ENCODE measurements at regions of chr7 and their contacts with region 1.

Region 1: GRCh38 chr7:28298870-28299518 is 113.3 kb upstream of the CREB5 start:
- DNase-seq: peak; percentile 56 to 70
- H3K4me3 ChIP-seq: no peak overlapping the region
- H3K4me3 Mint-ChIP-seq: no peak overlapping the region
- H3K27ac Mint-ChIP-seq: no peak overlapping the region
- H3K4me1 ChIP-seq: no peaks in the 10 kb centered on the region
- H3K4me1 Mint-ChIP-seq: no peaks in the 10 kb centered on the region
- H3K27me3 ChIP-seq: no peaks in the 10 kb centered on the region
- H3K27me3 Mint-ChIP-seq: peaks cover 3% of the 10 kb centered on the region
- CTCF ChIP-seq: peak; percentile 47 to 79

Region 2: GRCh38 chr7:28272461-28272877 is 26.5 kb before region 1 on chr7:
- CTCF ChIA-PET with region 1: no interaction called
- POLR2A ChIA-PET with region 1: no interaction called
- intact Hi-C with region 1: no loop called
- DNase-seq: peak; percentile 41 to 48
- H3K4me3 ChIP-seq: no peak overlapping the region
- H3K4me3 Mint-ChIP-seq: no peak overlapping the region
- H3K27ac Mint-ChIP-seq: no peak overlapping the region
- H3K4me1 ChIP-seq: no peaks in the 10 kb centered on the region
- H3K4me1 Mint-ChIP-seq: no peaks in the 10 kb centered on the region
- H3K27me3 ChIP-seq: no peaks in the 10 kb centered on the region
- H3K27me3 Mint-ChIP-seq: peaks cover 25% of the 10 kb centered on the region
- CTCF ChIP-seq: peak; percentile 58 to 77

Region 3: GRCh38 chr7:28364082-28364481 is 65.1 kb after region 1 on chr7:
- CTCF ChIA-PET with region 1: interaction called, 6 read pairs
- POLR2A ChIA-PET with region 1: no interaction called
- intact Hi-C with region 1: loop called (anchors 5 kb)
- DNase-seq: no peak
- H3K4me3 ChIP-seq: no peak overlapping the region
- H3K4me3 Mint-ChIP-seq: no peak overlapping the region
- H3K27ac Mint-ChIP-seq: no peak overlapping the region
- H3K4me1 ChIP-seq: no peaks in the 10 kb centered on the region
- H3K4me1 Mint-ChIP-seq: peaks cover 6% of the 10 kb centered on the region
- H3K27me3 ChIP-seq: no peaks in the 10 kb centered on the region; the same call in 1 of the 2 replicates
- H3K27me3 Mint-ChIP-seq: peaks cover 3% of the 10 kb centered on the region
- CTCF ChIP-seq: peak; percentile 5 to 42

Region 4: GRCh38 chr7:28378574-28379149 is 79.7 kb after region 1 on chr7:
- CTCF ChIA-PET with region 1: interaction called, 4 read pairs
- POLR2A ChIA-PET with region 1: no interaction called
- intact Hi-C with region 1: loop called (anchors 1 kb)
- DNase-seq: no peak
- H3K4me3 ChIP-seq: no peak overlapping the region
- H3K4me3 Mint-ChIP-seq: no peak overlapping the region
- H3K27ac Mint-ChIP-seq: no peak overlapping the region
- H3K4me1 ChIP-seq: 0 out of 2 replicates have a peak, but pooled peaks cover 4% of the 10 kb centered on the region
- H3K4me1 Mint-ChIP-seq: no peaks in the 10 kb centered on the region
- H3K27me3 ChIP-seq: no peaks in the 10 kb centered on the region
- H3K27me3 Mint-ChIP-seq: peaks cover 3% of the 10 kb centered on the region
- CTCF ChIP-seq: no peak

Region 5: GRCh38 chr7:28383975-28384374 is 85.0 kb after region 1 on chr7:
- CTCF ChIA-PET with region 1: interaction called, 4 read pairs
- POLR2A ChIA-PET with region 1: no interaction called
- intact Hi-C with region 1: loop called (anchors 1 kb)
- DNase-seq: no peak
- H3K4me3 ChIP-seq: no peak overlapping the region
- H3K4me3 Mint-ChIP-seq: no peak overlapping the region
- H3K27ac Mint-ChIP-seq: no peak overlapping the region
- H3K4me1 ChIP-seq: no peaks in the 10 kb centered on the region
- H3K4me1 Mint-ChIP-seq: no peaks in the 10 kb centered on the region
- H3K27me3 ChIP-seq: no peaks in the 10 kb centered on the region
- H3K27me3 Mint-ChIP-seq: peaks cover 3% of the 10 kb centered on the region
- CTCF ChIP-seq: no peak

Region 6: DNA sequence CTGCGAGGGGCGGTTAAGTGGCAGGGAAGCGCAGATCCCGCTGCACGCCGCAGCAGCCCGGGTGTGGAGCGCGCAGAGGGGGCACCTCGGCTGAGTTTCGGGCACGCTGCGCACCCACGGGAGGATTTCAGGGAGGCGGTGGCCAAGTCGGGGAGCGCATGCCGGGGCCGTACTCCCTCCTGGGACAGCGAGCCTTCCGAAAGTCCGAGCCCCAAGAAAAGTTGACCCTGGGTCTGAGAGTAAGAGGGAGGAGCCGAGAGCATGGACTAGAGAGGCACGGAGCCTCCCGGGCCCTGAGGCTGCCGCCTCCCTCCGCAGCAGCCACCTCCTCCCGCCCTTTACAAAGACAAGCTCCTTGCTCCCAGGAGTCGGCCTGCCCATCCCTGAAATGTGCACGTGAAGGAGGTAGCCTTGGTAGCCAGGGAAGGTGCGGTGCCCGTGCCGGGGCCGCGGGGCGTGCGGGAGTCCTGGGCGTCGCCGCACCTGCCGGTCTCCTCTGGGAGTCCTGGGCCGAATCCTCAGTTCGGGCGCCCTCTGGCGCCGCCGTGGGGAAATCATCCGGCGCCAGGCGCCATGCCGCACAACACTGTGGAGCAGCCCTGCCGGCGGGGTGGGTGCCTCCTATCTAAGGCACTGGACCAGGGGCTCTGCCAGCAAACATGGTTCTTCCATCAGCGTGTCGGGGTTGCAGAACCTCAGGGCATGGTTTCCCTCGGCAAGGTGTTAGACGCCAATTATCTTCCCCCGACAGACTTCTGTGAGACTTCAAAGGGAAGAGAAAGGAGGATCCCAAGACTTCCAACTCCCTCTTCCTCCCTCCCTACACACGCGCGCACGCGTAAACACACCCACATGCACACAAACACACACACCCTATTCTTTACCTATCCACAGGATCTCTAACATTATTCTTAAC is 555.1 kb after region 1 on chr7:
- CTCF ChIA-PET with region 1: no interaction called
- POLR2A ChIA-PET with region 1: no interaction called
- intact Hi-C with region 1: loop called (anchors 1 kb)
- DNase-seq: peak; percentile 79 to 94
- H3K4me3 ChIP-seq: peak overlapping the region; percentile 46
- H3K4me3 Mint-ChIP-seq: peak overlapping the region; percentile 78
- H3K27ac Mint-ChIP-seq: peak overlapping the region; percentile 34
- H3K4me1 ChIP-seq: peaks cover 14% of the 10 kb centered on the region; the same call in 1 of the 2 replicates
- H3K4me1 Mint-ChIP-seq: peaks cover 7% of the 10 kb centered on the region
- H3K27me3 ChIP-seq: peaks cover 1% of the 10 kb centered on the region; the same call in 1 of the 2 replicates
- H3K27me3 Mint-ChIP-seq: peaks cover 15% of the 10 kb centered on the region
- CTCF ChIP-seq: peak; percentile 91 to 95

Measured in Caco-2 (cell line).